ENCODE measurements at regions of chr16 and their contacts with region 1.

Region 1: DNA sequence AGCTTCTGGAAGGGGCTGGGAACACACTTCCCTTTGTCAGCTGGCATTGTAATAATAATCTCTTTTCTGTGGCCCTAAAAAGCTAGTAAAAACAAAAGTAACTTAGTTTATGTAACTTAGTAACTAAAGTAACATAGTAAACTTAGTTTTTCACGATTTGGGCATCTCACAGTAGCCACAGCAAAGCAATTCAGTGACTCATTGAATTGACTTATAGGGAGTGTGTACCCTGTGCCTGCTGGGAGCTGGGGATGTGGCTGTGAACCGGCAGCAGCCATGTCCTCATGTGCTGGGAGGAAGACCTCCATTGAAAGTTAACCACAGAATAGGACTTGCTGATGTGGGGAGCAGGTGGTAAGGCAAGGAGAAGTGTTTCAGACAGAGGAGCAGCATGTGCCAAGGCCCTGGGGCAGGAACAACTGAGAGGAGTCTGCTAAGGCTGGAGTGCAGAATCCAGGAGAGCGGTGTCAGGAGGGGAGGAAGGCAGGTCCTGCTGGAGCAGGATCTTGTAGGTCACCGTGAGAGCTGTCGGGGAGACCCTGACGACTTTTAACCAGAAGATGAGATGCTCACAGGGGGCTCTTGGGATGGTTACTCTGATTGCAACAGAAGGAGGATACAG is 112.8 kb downstream of the PLCG2 start:
- DNase-seq: no peak
- H3K4me3 ChIP-seq: no peak overlapping the region
- H3K4me3 Mint-ChIP-seq: no peak overlapping the region
- H3K27ac ChIP-seq: no peak overlapping the region
- H3K27ac Mint-ChIP-seq: peak overlapping the region in 1 of 7 donors; percentile 78
- H3K4me1 ChIP-seq: no peaks in the 10 kb centered on the region
- H3K4me1 Mint-ChIP-seq: no peaks in the 10 kb centered on the region
- H3K27me3 ChIP-seq: no peaks in the 10 kb centered on the region
- H3K27me3 Mint-ChIP-seq: peaks cover 0 to 2% of the 10 kb centered on the region in 2 donors

Region 2: GRCh38 chr16:81956213-81956948 is 64.5 kb after region 1 on chr16:
- CTCF ChIA-PET with region 1: no interaction called
- POLR2A ChIA-PET with region 1: no interaction called
- intact Hi-C with region 1: no loop called
- DNase-seq: no peak
- H3K4me3 ChIP-seq: no peak overlapping the region
- H3K4me3 Mint-ChIP-seq: no peak overlapping the region
- H3K27ac ChIP-seq: no peak overlapping the region
- H3K27ac Mint-ChIP-seq: no peak overlapping the region
- H3K4me1 ChIP-seq: no peaks in the 10 kb centered on the region
- H3K4me1 Mint-ChIP-seq: no peaks in the 10 kb centered on the region
- H3K27me3 ChIP-seq: no peaks in the 10 kb centered on the region
- H3K27me3 Mint-ChIP-seq: no peaks in the 10 kb centered on the region

Region 3: GRCh38 chr16:82061861-82062525 is 170.1 kb after region 1 on chr16:
- CTCF ChIA-PET with region 1: no interaction called
- POLR2A ChIA-PET with region 1: no interaction called
- intact Hi-C with region 1: loop called (anchors 2 kb)
- DNase-seq: peak in 1 of 5 donors; percentile 5
- H3K4me3 ChIP-seq: no peak overlapping the region
- H3K4me3 Mint-ChIP-seq: no peak overlapping the region
- H3K27ac ChIP-seq: no peak overlapping the region
- H3K27ac Mint-ChIP-seq: no peak overlapping the region
- H3K4me1 ChIP-seq: no peaks in the 10 kb centered on the region
- H3K4me1 Mint-ChIP-seq: no peaks in the 10 kb centered on the region
- H3K27me3 ChIP-seq: no peaks in the 10 kb centered on the region
- H3K27me3 Mint-ChIP-seq: peaks cover 10 to 12% of the 10 kb centered on the region in 2 donors

Measured in CD4-positive, alpha-beta memory T cell (primary cell).